Right ventricle myocardium inferior (tissue), 1 donor: ENCODE measurements at regions of chr9 and their contacts with region 1.

Region 1: DNA sequence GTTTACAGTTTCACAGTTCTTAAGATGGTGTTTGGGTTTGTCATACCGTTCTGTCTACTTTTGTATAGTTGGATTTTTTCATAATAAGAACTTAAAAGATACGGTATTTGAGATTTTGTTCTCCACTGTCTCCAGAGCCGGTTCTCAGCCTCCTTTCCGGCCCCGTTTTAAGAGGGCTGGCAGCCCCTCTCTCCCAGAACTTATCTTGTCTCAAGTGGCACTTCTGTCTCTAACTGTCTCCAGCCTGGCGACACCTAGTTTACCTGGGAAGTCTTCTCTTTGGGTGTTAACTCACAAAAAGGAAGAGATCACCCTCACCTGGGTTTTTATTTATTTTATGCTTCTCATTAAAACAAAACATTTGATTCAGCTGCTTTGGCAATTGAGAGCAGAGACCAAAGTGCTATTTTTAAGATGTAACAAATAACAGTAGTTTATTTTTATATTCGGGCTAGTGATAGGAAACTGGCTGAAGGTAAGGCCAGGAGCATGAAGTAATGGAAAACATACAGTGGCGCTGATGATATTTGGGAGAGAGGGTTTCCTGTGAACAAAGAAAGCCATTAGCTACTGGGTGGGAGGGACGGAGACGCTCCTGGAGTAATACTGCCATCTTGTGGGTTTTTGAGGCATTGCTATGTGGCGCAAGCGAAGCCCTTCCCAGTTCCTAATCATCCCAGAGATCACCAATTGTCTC is 48.3 kb downstream of the ACER2 start:
- DNase-seq: no peak
- ATAC-seq: peak; percentile 95

Region 2: DNA sequence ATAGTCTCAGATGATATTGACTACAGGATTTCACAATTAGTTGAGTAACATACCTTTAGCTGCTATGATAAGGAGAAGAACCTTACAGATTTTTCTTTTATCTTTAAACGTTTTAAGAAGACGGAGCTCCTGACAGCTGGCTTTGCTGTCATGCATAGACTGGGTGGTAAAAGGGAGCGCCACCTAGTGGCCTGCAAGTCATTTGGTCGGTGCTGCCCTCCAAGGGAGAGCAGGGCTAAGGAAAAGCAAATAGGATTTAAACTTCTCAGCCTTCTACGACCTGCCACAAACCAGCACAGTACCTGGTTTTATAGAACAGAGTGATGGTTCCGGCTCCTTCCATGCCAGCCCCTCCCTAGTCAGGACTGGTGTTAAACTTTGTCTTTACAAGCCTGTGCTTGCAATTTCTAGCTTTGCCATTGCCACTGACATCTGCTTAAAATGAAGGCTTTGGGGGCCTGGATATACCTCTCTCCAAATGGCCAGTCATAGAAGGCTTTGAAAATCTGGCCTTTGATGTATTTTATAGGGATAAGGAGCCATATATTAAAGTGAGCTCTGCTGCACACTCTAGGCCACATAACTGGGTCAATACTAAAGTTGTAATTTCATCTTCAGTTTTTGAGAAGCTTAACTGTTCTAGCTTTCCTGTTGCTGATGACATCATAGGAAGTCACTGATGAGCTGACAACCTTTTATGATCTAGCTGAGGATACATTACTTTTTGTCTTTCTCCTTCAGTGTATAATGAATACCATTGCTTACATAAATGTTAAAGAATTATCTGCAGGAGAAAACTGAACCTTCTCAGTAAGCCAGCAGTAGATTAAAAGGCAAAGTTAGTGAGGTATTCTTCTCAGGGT is 1014.3 kb before region 1 on chr9:
- intact Hi-C with region 1: loop called (anchors 10 kb)
- DNase-seq: peak; percentile 70
- ATAC-seq: peak; percentile 77

Region 3: DNA sequence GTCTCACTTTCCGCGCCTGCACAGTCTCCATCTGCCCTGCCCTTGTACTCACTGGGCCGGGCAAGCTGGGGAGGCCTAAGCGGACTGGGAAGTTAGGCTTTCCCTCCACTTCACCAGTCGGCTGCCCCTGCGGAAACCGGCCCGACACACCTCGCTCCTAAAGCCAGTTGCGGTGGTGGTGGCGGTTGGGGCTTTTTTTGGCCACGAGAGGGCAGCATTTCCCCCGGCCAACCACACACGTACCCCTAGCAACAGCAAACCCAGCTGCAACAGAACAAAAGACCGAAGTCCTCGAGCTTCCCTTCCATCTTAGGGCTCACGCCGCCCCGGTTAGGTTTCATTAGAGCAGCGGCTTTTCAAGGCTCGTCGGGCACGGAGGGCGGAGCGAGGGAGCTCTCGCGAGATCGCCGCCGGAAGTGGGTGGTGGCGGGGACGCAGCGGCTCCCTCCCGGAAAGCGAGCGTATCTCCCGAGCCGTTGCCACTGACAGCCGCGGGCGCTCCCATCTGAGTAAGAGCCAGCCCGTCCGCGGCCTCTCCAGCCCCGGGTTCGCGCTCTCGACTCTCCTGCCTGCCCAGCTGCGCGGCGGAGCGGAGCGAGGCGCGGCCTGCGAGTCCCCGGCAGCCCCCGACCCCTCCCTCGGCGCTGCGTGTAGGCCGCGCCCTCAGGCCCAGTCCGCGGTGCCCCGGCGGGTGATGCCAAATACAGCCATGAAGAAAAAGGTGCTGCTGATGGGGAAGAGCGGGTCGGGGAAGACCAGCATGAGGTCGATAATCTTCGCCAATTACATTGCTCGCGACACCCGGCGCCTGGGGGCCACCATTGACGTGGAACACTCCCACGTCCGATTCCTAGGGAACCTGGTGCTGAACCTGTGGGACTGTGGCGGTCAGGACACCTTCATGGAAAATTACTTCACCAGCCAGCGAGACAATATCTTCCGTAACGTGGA is 407.9 kb before region 1 on chr9 and contains the start of gene RRAGA:
- intact Hi-C with region 1: loop called (anchors 1 kb)
- DNase-seq: peak; percentile 97
- ATAC-seq: peak; percentile 97
- total RNA-seq, gene RRAGA: 76.9 TPM

Region 4: DNA sequence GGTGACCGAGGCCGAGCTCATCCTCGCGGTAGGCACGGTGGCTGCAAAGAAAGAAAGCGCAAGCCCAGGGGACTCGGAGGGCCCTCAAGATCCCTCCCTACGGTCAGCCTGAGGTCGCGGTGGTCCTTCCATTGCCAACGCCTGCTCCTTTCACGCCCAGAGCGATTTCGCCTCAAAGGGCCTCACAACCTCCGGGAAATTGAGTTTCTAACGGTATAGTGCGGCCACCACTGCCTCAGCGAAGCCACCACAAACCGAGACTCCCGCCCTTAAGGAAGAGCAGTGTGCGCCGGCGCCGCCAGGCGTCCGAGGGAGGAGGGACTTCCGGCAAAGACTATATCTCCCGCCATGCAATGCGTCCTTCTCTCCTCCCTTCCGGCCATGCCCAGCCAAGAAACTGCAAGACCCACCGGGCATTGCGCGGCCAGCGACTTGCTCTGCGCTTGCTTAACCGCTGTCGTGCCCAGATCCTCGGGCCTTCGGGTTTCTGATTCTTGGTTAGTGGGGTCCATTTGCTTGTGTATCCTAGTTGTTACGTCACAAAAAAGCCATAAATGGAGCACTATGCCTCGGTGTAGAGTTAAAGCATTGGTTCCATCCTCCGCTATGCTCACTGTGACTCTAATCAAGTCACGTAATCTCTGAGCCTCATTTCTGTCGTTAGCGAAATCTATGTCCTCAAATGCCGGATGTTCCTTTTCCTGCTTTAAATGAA is 354.4 kb before region 1 on chr9 and contains the start of gene HAUS6:
- intact Hi-C with region 1: loop called (anchors 10 kb)
- DNase-seq: peak; percentile 97
- ATAC-seq: peak; percentile 99
- total RNA-seq, gene HAUS6: 6.0 TPM

Region 5: GRCh38 chr9:19174127-19174912 is 282.8 kb before region 1 on chr9:
- intact Hi-C with region 1: loop called (anchors 5 kb)
- DNase-seq: peak; percentile 81
- ATAC-seq: peak; percentile 91

Region 6: DNA sequence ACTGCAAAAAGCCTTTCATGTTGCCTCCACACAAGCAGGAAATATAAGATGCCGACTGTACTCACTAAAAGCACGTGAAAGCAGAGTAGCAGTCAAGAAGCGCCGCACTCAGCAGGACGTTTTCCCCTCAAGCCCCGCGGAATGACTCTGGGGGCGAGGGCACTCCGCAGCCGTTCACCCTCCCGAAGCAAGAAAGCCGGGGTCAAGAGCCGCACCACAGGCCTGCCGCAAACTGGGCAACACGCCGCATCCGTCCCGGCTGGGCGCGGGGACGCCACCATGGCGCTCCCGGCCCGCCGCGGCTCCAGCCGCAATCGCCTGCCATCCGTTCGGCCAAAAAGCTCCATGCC is 77.5 kb before region 1 on chr9:
- intact Hi-C with region 1: loop called (anchors 2 kb)
- DNase-seq: peak; percentile 75
- ATAC-seq: peak; percentile 47

Region 7: DNA sequence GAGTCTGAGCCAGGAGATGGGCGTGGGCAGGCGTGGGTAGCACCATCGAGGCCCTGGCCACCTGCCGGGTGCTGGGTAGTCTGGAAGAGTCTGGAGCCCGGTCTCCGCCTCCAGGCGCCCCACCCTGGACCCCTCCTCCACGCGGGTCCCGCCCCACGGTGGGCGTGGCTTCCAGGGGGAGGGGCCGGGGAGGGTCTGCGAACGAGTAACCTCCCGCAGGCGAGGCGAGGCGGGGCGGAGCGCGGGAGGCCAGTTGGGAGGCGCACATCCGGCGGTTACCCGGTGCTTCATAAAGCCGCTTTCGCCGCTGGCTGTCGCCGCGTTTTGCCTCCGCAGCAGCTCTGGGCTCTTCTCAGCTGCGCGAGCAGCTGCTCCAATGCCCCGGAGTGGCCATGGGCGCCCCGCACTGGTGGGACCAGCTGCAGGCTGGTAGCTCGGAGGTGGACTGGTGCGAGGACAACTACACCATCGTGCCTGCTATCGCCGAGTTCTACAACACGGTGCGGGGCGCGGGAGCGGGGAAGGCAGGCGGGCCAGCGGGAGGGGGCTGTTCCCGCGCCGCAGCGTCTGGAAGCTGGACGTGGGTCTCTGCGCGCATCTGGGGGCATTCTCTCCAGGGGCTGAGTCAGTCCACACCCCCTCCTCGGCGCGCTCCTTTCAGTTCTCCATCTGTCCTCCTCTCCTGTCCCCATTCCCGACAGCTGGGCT is 48.3 kb before region 1 on chr9 and contains the start of gene ACER2:
- intact Hi-C with region 1: loop called (anchors 2 kb)
- DNase-seq: peak; percentile 98
- ATAC-seq: peak; percentile 98
- total RNA-seq, gene ACER2: 3.2 TPM

Region 8: GRCh38 chr9:19424176-19424779 is 32.9 kb before region 1 on chr9:
- intact Hi-C with region 1: no loop called
- DNase-seq: no peak
- ATAC-seq: peak; percentile 54